Activated CD4-positive, alpha-beta T cell treated with anti-CD3 and anti-CD28 coated beads for 36 hours (primary cell): ENCODE measurements at regions of chr2 and their contacts with region 1.

Region 1: GRCh38 chr2:8681786-8682692 is at the start of gene ID2:
- DNase-seq: peak; percentile 99
- ATAC-seq: peak; percentile 73
- H3K4me3 Mint-ChIP-seq: peak within 1 kb of the TSS; percentile 98
- H3K27ac Mint-ChIP-seq: peak within 1 kb of the TSS; percentile 97
- H3K4me1 Mint-ChIP-seq: peaks cover 34% of the 10 kb centered on the region
- H3K27me3 Mint-ChIP-seq: peaks cover 10% of the 10 kb centered on the region
- total RNA-seq, gene ID2: 171 to 213 TPM

Region 2: GRCh38 chr2:7097348-7097895 is 1584.6 kb before region 1 on chr2:
- CTCF ChIA-PET with region 1: no interaction called
- POLR2A ChIA-PET with region 1: no interaction called
- intact Hi-C with region 1: loop called (anchors 1 to 5 kb)
- DNase-seq: peak; percentile 86
- ATAC-seq: peak; percentile 95
- H3K4me3 Mint-ChIP-seq: peak overlapping the region; percentile 39
- H3K27ac Mint-ChIP-seq: peak overlapping the region; percentile 27
- H3K4me1 Mint-ChIP-seq: peaks cover 6% of the 10 kb centered on the region
- H3K27me3 Mint-ChIP-seq: no peaks in the 10 kb centered on the region

Region 3: DNA sequence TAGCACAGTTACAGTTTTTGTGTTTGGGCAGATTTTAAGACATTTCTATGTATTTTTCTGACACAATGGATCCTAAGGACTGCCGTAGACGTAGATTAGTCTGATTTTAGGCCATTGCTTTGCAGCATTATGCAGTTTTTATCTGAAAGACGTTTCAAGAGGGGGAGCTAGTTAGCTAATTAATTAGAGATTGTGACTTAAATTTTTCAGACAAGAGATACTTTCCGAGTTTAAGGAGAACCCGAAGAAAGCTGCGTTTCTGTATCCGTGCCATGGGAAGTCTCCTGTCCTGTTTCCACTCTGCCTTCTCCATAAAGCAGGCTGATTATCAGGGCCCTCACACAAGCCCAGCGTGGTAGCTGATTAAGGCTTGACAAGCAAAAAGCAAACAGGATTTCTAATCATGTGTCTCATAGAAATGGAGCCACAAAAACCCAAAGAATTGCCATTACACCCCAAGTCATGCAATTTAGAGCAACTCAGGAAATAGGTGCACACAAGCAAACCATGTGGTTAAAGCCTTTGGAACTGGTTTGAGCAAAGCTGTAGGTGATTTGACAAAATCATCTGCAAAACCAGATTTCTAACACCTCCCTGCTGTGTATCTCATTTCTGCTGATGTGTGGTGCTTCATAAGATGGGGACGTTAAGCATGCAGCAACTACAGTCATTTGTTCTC is 956.7 kb before region 1 on chr2:
- CTCF ChIA-PET with region 1: no interaction called
- POLR2A ChIA-PET with region 1: no interaction called
- intact Hi-C with region 1: loop called in 1 of 2 experiments (anchors 5 kb)
- DNase-seq: peak; percentile 19
- ATAC-seq: peak; percentile 87
- H3K4me3 Mint-ChIP-seq: peak overlapping the region; percentile 61
- H3K27ac Mint-ChIP-seq: peak overlapping the region; percentile 86
- H3K4me1 Mint-ChIP-seq: peaks cover 25% of the 10 kb centered on the region
- H3K27me3 Mint-ChIP-seq: no peaks in the 10 kb centered on the region

Region 4: GRCh38 chr2:8049851-8050571 is 632.0 kb before region 1 on chr2:
- CTCF ChIA-PET with region 1: no interaction called
- POLR2A ChIA-PET with region 1: interaction called, 8 read pairs
- intact Hi-C with region 1: loop called in 1 of 2 experiments (anchors 1 kb)
- DNase-seq: peak; percentile 87
- ATAC-seq: peak; percentile 97
- H3K4me3 Mint-ChIP-seq: peak overlapping the region; percentile 30
- H3K27ac Mint-ChIP-seq: peak overlapping the region; percentile 88
- H3K4me1 Mint-ChIP-seq: peaks cover 34% of the 10 kb centered on the region
- H3K27me3 Mint-ChIP-seq: peaks cover 5% of the 10 kb centered on the region

Region 5: DNA sequence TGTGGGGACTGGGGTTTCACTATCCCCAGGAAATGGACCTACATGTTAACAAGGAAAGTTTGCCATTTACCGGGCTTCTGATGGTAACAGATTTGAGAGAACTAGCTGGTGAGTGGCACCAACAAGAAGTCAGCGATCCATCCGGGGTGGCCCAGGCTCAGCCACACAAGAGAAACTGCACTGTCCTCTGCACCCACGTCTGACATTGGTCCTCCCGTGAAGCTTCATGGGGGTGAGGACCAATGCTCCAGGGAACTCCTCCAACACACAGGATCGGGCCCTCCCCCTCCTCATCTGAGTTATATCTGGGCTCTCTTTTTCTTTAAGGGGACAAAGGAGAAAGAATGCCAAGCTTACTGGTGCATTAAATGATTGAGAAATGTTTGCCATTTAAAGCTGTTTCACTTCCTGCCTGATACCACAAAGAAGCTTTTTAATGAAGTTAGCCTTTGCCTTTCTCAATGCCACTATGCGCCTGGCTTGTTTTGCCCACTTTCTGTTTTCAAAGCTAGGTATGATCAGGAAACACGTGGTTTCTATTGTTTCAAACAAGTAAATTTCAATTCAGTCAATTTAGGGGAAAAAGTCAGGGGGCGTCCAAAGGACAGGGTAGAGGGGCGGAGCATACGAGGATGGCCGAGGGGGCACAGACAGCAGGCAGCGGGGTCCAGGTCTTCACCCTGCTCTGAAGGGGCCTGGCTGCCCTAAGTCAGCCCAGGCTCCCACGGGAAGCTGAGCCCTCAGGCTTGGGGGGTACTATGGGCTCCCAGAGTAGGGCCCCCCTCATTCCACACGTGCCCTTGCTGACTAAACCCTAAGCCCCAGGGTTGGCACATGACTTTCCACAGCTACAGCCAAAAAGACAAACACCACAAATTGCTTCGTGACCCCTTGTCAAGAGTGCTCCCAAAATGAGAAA is 204.2 kb before region 1 on chr2:
- CTCF ChIA-PET with region 1: interaction called, 3 read pairs
- POLR2A ChIA-PET with region 1: interaction called, 29 read pairs
- intact Hi-C with region 1: loop called in 1 of 2 experiments (anchors 2 kb)
- DNase-seq: peak; percentile 45
- ATAC-seq: no peak
- H3K4me3 Mint-ChIP-seq: peak overlapping the region; percentile 49
- H3K27ac Mint-ChIP-seq: peak overlapping the region; percentile 89
- H3K4me1 Mint-ChIP-seq: peaks cover 77% of the 10 kb centered on the region
- H3K27me3 Mint-ChIP-seq: no peaks in the 10 kb centered on the region

Region 6: DNA sequence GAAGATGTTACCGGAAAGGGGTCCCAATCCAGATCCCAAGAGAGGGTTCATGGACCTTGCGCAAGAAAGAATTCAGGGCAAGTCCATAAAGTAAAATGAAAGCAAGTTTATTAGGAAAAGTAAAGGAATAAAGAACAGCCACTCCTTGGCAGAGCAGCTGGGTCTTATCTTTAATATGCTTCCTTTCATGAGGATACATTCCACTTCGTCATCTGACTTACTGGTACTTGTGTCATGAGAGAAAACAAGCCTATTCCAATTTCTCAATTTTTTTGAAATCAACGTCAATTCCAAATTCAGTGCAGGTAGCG is 61.0 kb before region 1 on chr2:
- CTCF ChIA-PET with region 1: no interaction called
- POLR2A ChIA-PET with region 1: no interaction called
- intact Hi-C with region 1: no loop called
- DNase-seq: no peak
- ATAC-seq: no peak
- H3K4me3 Mint-ChIP-seq: no peak overlapping the region
- H3K27ac Mint-ChIP-seq: no peak overlapping the region
- H3K4me1 Mint-ChIP-seq: no peaks in the 10 kb centered on the region
- H3K27me3 Mint-ChIP-seq: peaks cover 8% of the 10 kb centered on the region

Region 7: DNA sequence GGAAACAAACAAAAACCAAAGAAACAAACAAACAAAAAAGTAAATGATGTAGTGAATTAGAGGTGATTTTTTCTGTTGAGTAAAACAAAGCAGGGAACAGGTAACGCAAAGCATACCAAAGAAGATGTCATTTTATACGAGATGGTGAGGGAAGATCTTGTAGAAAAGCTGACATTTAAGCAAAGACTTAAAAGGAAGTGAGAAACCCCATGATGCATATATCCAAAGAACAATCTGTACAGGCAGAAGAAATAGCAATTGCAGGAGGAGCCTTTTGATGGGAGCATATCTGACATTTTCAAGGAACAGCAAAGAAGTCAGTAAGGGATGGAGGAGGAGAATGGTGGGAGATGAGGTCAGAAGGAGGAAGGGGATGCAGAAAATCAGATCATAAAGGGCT is 92.3 kb after region 1 on chr2:
- CTCF ChIA-PET with region 1: no interaction called
- POLR2A ChIA-PET with region 1: no interaction called
- intact Hi-C with region 1: no loop called
- DNase-seq: no peak
- ATAC-seq: no peak
- H3K4me3 Mint-ChIP-seq: no peak overlapping the region
- H3K27ac Mint-ChIP-seq: no peak overlapping the region
- H3K4me1 Mint-ChIP-seq: peaks cover 2% of the 10 kb centered on the region
- H3K27me3 Mint-ChIP-seq: no peaks in the 10 kb centered on the region

Region 8: GRCh38 chr2:8836971-8837794 is 155.1 kb after region 1 on chr2 and contains the start of gene KIDINS220:
- CTCF ChIA-PET with region 1: interaction called, 3 read pairs
- POLR2A ChIA-PET with region 1: no interaction called
- intact Hi-C with region 1: loop called in 1 of 2 experiments (anchors 1 kb)
- DNase-seq: peak; percentile 92
- ATAC-seq: peak; percentile 95
- H3K4me3 Mint-ChIP-seq: peak within 1 kb of the TSS; percentile 99
- H3K27ac Mint-ChIP-seq: peak within 1 kb of the TSS; percentile 98
- H3K4me1 Mint-ChIP-seq: peaks cover 39% of the 10 kb centered on the region
- H3K27me3 Mint-ChIP-seq: no peaks in the 10 kb centered on the region
- total RNA-seq, gene KIDINS220: 22.7 to 24.4 TPM